Breast epithelium (tissue), 4 donors: ENCODE measurements at regions of chr2 and their contacts with region 1.

Region 1: GRCh38 chr2:163698857-163699256 is 37.0 kb downstream of the FIGN start:
- DNase-seq: no peak
- H3K4me3 ChIP-seq: no peak overlapping the region
- H3K27ac ChIP-seq: peak overlapping the region in 1 of 2 donors; percentile 51
- H3K4me1 ChIP-seq: no peaks in the 10 kb centered on the region
- H3K27me3 ChIP-seq: no peaks in the 10 kb centered on the region
- CTCF ChIP-seq: no peak
- POLR2A ChIP-seq: no peak

Region 2: GRCh38 chr2:163637871-163638270 is 61.0 kb before region 1 on chr2:
- intact Hi-C with region 1: loop called (anchors 2 kb)
- DNase-seq: no peak
- H3K4me3 ChIP-seq: no peak overlapping the region
- H3K27ac ChIP-seq: no peak overlapping the region
- H3K4me1 ChIP-seq: no peaks in the 10 kb centered on the region
- H3K27me3 ChIP-seq: no peaks in the 10 kb centered on the region
- CTCF ChIP-seq: no peak
- POLR2A ChIP-seq: no peak

Region 3: DNA sequence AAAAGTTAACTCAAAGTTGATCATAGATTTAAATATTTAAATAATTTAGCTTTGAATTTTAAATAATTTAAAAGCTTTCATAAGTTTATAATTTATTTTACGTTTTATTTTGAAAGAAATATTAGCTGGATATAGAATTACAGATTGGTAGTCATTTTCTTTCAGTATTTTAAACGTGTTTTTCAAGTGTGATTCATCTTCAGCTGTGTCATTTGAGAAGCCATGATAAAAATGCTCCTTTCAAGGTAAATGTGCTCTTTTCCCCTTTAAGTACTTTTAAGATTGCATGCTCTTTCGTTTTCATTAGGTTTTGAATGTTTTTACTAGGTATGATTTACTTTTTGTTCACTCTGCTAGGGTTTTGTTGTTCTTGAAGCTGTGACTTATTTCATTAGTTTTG is 153.8 kb after region 1 on chr2:
- intact Hi-C with region 1: no loop called
- DNase-seq: no peak
- H3K4me3 ChIP-seq: no peak overlapping the region
- H3K27ac ChIP-seq: no peak overlapping the region
- H3K4me1 ChIP-seq: no peaks in the 10 kb centered on the region
- H3K27me3 ChIP-seq: no peaks in the 10 kb centered on the region
- CTCF ChIP-seq: no peak
- POLR2A ChIP-seq: no peak